Posterior cingulate gyrus (tissue), 11 donors: ENCODE measurements at regions of chr5 and their contacts with region 1.

Region 1: GRCh38 chr5:111092062-111092853 is at the start of gene WDR36:
- DNase-seq: peak; percentile 84 to 98 (median 90)

Region 2: DNA sequence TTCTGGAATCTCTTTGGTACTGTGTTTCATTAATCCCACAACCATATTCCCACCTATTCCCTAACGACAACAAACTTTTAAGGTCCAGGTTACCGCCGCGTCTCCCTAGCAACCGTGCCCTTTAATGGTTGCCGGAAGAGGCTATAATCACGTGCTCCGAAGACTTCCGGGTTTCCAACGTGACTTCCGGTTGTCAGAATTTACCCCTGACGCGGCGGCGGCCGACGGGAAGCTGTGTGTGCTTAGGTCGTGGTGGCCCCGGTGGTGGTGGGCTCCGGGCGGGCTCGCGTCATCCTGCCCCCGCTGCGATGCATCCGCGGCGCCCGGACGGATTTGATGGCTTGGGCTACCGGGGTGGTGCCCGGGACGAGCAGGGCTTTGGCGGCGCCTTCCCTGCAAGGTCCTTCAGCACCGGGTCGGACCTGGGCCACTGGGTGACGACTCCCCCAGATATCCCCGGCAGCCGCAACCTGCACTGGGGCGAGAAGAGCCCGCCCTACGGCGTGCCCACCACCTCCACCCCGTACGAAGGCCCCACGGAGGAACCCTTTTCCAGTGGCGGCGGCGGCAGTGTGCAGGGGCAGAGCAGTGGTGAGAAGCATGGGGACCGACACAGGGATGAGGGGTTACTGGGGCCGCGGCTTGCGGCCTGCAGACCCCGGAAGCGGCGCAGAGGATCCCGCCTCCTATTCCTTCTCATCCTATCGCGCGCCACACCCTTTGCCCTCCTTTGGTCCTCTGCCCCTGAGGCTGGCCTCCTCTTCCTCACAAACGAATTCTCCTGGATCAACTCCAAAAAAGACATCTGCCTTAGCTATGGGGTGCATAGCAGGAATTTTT is 353.2 kb before region 1 on chr5 and contains the start of gene SLC25A46:
- intact Hi-C with region 1: loop called (anchors 5 kb)
- DNase-seq: peak; percentile 74 to 97 (median 87)

Region 3: GRCh38 chr5:110757118-110757729 is 335.0 kb before region 1 on chr5:
- intact Hi-C with region 1: loop called (anchors 5 kb)
- DNase-seq: no peak

Region 4: DNA sequence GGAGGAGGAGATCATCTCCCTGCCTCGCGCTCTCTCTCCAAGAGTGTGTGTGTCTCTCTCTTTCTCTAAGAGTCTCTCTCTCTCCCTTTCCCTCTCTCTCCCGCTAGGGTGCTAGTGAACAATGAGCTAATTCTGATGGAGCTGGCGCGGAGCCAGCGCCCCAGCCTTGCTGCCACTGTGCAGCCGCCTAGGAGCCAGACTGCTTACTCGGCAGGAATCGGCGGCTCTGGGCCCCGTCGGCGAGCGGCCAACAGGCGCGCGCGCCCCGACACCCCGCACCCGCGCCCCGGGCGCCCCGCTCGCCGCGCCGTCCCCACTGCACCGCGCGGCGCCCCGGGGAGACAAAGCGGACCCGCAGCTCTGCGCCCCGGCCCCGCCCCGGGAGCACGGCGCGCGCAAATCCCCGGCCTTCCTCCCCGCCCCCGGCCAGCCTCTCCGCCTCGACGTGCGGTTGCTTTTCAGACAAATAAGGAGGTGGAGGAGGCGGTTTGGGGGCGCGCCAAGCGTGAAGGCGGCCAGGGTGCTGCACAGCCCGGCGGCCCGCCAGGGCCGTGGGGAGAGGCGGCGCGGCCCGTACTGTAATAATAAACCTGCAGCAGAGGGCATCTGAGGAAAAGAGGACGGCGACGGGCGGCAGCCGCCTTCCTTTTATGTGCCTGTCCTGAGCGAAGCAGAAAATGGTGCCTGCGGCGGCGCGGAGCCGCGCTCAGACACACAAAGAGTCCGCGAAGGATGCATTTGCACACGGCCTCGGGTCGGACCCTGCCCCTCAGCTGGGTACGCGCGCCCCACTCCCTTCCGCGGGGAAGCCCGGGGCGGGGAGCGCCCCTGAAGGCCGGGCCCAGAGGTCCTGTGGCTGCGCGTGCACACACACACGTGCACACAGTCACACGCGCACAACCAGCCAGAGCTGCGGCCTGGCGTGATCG is 665.4 kb after region 1 on chr5:
- intact Hi-C with region 1: loop called (anchors 5 kb)
- DNase-seq: peak; percentile 84 to 98 (median 90)

Region 5: GRCh38 chr5:112160652-112161391 is 1068.6 kb after region 1 on chr5:
- intact Hi-C with region 1: loop called (anchors 2 kb)
- DNase-seq: peak; percentile 86 to 98 (median 91)